Mammary epithelial cell (primary cell): ENCODE measurements at regions of chr21 and their contacts with region 1.

Region 1: GRCh38 chr21:45973659-45974072 is 7.9 kb upstream of the COL6A1 start:
- DNase-seq: peak; percentile 24
- H3K4me3 ChIP-seq: peak overlapping the region; percentile 31 to 47 (median 46)
- H3K27ac ChIP-seq: no peak overlapping the region
- H3K4me1 ChIP-seq: peaks cover 26% of the 10 kb centered on the region
- H3K27me3 ChIP-seq: peaks cover 2% of the 10 kb centered on the region
- CTCF ChIP-seq: peak; percentile 63 to 75

Region 2: DNA sequence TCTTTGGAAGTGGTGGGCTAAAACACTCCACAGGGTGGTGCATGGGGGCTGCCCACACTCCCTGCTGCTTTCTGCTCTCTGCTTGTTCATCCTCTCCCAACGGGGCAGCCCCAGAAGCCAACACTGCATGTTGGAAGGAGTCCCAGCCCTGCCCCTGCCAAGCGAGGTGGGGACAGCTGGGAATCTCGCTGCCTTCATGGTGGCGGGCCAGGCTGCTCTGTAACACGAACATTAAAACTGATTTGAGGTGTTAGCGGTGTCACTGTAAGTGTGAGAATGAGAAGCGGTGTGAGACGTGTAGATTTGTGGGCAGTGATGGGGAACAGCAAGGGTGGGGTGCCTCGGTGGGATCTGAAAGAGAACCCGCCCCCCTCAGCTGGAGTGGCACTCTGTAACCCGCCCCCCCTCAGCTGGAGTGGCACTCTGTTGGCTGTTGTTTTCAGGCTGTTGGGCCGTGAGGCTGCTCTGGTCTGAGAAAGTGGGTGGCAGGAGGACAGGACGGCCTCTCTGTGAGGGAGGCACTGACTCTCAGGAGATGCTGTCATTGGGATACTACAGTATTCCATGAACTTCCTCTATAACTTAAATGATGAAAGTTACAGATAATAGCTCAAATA is 249.2 kb before region 1 on chr21:
- CTCF ChIA-PET with region 1: no interaction called
- dilution Hi-C with region 1: no loop called
- in situ Hi-C with region 1: no loop called
- intact Hi-C with region 1: no loop called
- DNase-seq: no peak
- H3K4me3 ChIP-seq: no peak overlapping the region
- H3K27ac ChIP-seq: no peak overlapping the region
- H3K4me1 ChIP-seq: no peaks in the 10 kb centered on the region
- H3K27me3 ChIP-seq: no peaks in the 10 kb centered on the region
- CTCF ChIP-seq: no peak

Region 3: DNA sequence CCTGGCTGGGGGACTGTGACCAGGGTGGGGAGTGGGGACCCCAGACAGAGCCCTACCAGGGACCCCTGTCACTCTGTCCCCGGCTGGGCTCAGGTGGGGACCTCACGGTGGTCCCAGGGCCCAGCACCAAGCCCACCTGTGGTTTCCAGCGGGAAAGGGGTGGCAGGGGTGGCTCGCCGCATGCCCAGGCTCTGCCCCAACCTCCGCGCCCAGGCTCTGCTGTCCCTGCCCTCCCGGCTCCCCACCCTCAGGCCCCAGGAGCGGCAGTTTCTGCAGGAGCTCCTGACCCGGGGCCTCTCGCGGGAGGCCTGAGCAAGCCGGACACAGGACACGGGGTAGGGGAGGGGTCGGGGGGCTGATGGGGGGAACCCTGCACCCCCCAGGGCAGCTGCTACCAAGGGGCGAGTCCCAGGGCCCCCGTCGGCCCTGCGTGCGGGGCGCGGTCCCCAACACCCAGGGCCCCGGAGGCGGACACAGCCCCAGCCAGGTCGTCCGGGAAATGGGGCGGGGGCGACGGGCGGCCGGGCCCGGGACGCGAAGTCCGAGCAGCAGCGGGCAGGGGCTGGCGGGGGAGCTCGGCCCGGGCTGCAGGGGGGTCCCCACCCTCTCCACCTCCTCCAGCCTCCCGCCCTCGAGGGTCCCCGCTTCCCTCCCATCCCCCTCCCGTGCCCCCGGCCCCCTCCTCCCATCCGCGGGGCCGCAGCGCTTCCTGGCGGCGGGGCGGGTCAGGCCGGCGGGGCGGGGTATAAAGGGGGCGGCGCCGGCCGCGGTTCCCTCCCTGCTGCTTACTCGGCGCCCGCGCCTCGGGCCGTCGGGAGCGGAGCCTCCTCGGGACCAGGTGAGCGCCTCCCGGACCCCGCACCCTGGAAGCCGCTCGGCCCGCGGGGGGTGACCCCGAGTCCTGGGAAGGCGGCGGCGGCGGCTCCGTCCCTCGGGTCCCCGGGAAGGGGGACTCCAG is 123.9 kb after region 1 on chr21 and contains the start of gene COL6A2:
- CTCF ChIA-PET with region 1: no interaction called
- dilution Hi-C with region 1: no loop called
- in situ Hi-C with region 1: loop called in 1 of 2 experiments (anchors 25 kb)
- intact Hi-C with region 1: loop called (anchors 2 kb)
- DNase-seq: no peak
- H3K4me3 ChIP-seq: peak within 1 kb of the TSS in 1 of 3 experiments; percentile 27
- H3K27ac ChIP-seq: no peak within 1 kb of the TSS
- H3K4me1 ChIP-seq: no peaks in the 10 kb centered on the region
- H3K27me3 ChIP-seq: peaks cover 12% of the 10 kb centered on the region
- CTCF ChIP-seq: peak in 1 of 2 donors; percentile 26
- total RNA-seq, gene COL6A2: 0.87 to 47.0 TPM

Region 4: GRCh38 chr21:46110499-46111192 is 137.0 kb after region 1 on chr21:
- CTCF ChIA-PET with region 1: no interaction called
- dilution Hi-C with region 1: no loop called
- in situ Hi-C with region 1: loop called in 1 of 2 experiments (anchors 25 kb)
- intact Hi-C with region 1: no loop called
- DNase-seq: no peak
- H3K4me3 ChIP-seq: no peak overlapping the region
- H3K27ac ChIP-seq: no peak overlapping the region
- H3K4me1 ChIP-seq: no peaks in the 10 kb centered on the region
- H3K27me3 ChIP-seq: no peaks in the 10 kb centered on the region
- CTCF ChIP-seq: no peak

Region 5: GRCh38 chr21:46210378-46211136 is 236.9 kb after region 1 on chr21:
- CTCF ChIA-PET with region 1: no interaction called
- dilution Hi-C with region 1: loop called (anchors 25 kb)
- in situ Hi-C with region 1: no loop called
- intact Hi-C with region 1: no loop called
- DNase-seq: no peak
- H3K4me3 ChIP-seq: no peak overlapping the region
- H3K27ac ChIP-seq: no peak overlapping the region
- H3K4me1 ChIP-seq: peaks cover 6% of the 10 kb centered on the region
- H3K27me3 ChIP-seq: no peaks in the 10 kb centered on the region
- CTCF ChIP-seq: no peak

Region 6: DNA sequence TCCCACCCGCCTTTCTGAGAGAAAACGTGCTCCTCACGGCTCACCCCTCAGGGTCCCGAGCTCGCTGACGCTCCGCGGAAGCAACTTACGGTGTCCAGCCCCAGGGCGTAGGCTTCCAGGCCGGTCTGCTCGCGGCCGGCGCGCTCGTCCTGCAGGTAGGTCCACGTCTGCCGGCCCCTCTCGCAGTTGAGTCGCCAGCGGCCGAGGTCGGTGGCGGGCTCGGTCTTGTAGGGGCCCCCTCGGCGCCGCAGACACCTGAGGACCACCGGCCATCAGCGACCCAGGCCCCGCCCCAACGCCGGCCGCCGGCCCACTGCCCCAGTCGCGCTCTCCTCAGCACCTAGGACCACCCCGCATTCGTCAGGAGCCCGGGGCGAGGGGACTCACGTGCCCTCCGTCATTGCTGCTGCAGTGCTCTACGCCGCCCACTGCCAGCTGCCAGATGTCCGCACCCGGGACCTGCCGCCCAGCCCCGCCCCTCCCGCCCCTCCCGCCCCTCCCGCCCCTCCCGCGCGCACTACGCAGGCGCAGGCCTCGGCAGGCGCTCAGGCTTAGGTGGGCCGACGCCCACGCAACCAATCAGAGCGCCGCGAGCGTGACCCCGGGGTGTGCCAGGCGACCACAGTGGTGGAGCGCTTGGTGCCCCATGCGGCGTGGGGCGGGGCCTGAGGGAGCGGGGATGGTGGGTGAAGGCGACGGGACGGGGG is 254.8 kb after region 1 on chr21 and contains the start of gene LSS:
- CTCF ChIA-PET with region 1: no interaction called
- dilution Hi-C with region 1: loop called (anchors 25 kb)
- in situ Hi-C with region 1: no loop called
- intact Hi-C with region 1: loop called (anchors 2 kb)
- DNase-seq: peak; percentile 96
- H3K4me3 ChIP-seq: peak within 1 kb of the TSS; percentile 93 to 94 (median 94)
- H3K27ac ChIP-seq: peak within 1 kb of the TSS; percentile 87
- H3K4me1 ChIP-seq: peaks cover 25% of the 10 kb centered on the region
- H3K27me3 ChIP-seq: no peaks in the 10 kb centered on the region
- CTCF ChIP-seq: no peak
- total RNA-seq, gene LSS: 69.2 to 126 TPM